Activated naive CD4-positive, alpha-beta T cell treated with anti-CD3 and anti-CD28 coated beads for 36 hours (primary cell): ENCODE measurements at regions of chr2 and their contacts with region 1.

Region 1: GRCh38 chr2:152036611-152037469 is 62.0 kb downstream of the CACNB4 start:
- DNase-seq: peak; percentile 79
- H3K4me3 Mint-ChIP-seq: no peak overlapping the region
- H3K27ac Mint-ChIP-seq: no peak overlapping the region
- H3K4me1 Mint-ChIP-seq: no peaks in the 10 kb centered on the region
- H3K27me3 Mint-ChIP-seq: no peaks in the 10 kb centered on the region

Region 2: DNA sequence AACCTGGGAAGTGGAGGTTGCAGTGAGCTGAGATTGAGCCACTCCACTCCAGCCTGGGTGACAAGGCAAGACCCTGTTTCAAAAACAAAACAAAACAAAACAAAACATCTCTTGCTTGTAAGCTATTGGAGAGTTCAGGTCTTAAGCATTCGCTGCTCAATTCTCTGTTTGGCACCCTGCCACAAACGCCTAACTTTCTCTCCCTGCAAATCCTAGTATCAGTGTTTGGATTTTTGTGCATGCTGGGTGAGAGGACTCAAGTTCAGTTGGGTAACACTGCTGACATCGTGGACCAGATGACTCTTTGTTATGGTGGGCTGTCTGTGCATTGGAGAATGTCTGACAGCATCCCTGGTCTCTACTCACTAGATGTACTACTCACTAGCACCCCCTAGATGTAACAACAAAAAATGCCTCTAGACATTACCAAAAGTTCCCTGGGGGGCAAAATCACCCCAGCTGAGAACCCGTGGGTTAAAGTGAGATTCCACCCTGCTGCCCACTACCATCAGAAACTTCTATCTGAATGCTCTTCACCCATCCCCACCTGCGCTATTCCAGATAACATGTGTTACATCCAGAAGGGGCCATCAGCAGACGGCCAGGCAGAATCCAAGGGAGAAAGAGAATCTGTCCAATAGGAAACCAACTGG is 11.1 kb after region 1 on chr2:
- CTCF ChIA-PET with region 1: interaction called, 20 read pairs
- intact Hi-C with region 1: no loop called
- DNase-seq: no peak
- H3K4me3 Mint-ChIP-seq: no peak overlapping the region
- H3K27ac Mint-ChIP-seq: no peak overlapping the region
- H3K4me1 Mint-ChIP-seq: no peaks in the 10 kb centered on the region
- H3K27me3 Mint-ChIP-seq: no peaks in the 10 kb centered on the region

Region 3: GRCh38 chr2:152421521-152422370 is 384.9 kb after region 1 on chr2:
- CTCF ChIA-PET with region 1: no interaction called
- intact Hi-C with region 1: loop called (anchors 5 kb)
- DNase-seq: peak; percentile 43
- H3K4me3 Mint-ChIP-seq: no peak overlapping the region
- H3K27ac Mint-ChIP-seq: peak overlapping the region; percentile 32
- H3K4me1 Mint-ChIP-seq: peaks cover 29% of the 10 kb centered on the region
- H3K27me3 Mint-ChIP-seq: peaks cover 19% of the 10 kb centered on the region

Region 4: DNA sequence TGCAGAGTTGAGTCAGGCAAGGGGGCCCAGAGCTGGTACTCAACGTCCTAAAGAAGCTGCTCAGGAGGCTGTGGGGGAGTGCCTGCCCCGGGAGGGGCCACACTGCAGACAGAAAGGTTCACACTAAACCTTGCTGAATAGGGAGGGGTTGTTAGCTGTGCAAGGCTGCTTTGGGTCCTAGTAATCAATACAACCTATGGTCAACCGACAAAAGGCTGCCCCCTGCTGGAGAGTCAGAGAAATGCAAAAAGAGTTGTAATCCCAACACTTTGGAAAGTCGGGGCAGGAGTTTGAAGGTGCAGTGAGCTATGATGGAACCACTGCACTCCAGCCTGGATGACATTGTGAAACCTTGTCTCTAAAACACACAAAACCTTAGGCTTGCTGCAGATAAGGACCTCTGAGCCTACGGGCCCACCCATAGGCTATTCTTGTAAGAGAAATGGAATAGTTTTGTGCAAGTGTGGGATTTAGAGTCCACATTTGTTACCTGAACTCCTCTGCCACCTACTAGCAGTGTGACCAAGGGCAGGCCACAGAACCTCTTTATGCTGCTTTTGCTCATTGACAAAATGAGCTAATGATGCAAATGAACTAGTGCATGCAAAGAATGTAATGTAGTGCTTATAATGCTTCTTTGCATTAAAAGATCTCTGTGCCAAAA is 598.9 kb after region 1 on chr2:
- CTCF ChIA-PET with region 1: interaction called, 34 read pairs
- intact Hi-C with region 1: loop called (anchors 1 kb)
- DNase-seq: peak; percentile 82
- H3K4me3 Mint-ChIP-seq: no peak overlapping the region
- H3K27ac Mint-ChIP-seq: no peak overlapping the region
- H3K4me1 Mint-ChIP-seq: peaks cover 3% of the 10 kb centered on the region
- H3K27me3 Mint-ChIP-seq: no peaks in the 10 kb centered on the region

Region 5: GRCh38 chr2:153519257-153519875 is 1482.5 kb after region 1 on chr2:
- CTCF ChIA-PET with region 1: no interaction called
- intact Hi-C with region 1: loop called (anchors 1 kb)
- DNase-seq: peak; percentile 73
- H3K4me3 Mint-ChIP-seq: no peak overlapping the region
- H3K27ac Mint-ChIP-seq: no peak overlapping the region
- H3K4me1 Mint-ChIP-seq: no peaks in the 10 kb centered on the region
- H3K27me3 Mint-ChIP-seq: peaks cover 20% of the 10 kb centered on the region